Activated CD4-positive, alpha-beta T cell treated with anti-CD3 and anti-CD28 coated beads for 36 hours (primary cell): ENCODE measurements at regions of chr1 and their contacts with region 1.

Region 1: GRCh38 chr1:17045634-17046333 is 8.0 kb downstream of the SDHB start:
- DNase-seq: no peak
- ATAC-seq: no peak
- H3K4me3 Mint-ChIP-seq: no peak overlapping the region
- H3K27ac Mint-ChIP-seq: peak overlapping the region; percentile 42
- H3K4me1 Mint-ChIP-seq: peaks cover 9% of the 10 kb centered on the region
- H3K27me3 Mint-ChIP-seq: no peaks in the 10 kb centered on the region

Region 2: GRCh38 chr1:16913833-16914662 is 131.7 kb before region 1 on chr1:
- CTCF ChIA-PET with region 1: no interaction called
- POLR2A ChIA-PET with region 1: no interaction called
- intact Hi-C with region 1: no loop called
- DNase-seq: peak; percentile 96
- ATAC-seq: peak; percentile 96
- H3K4me3 Mint-ChIP-seq: peak overlapping the region; percentile 89
- H3K27ac Mint-ChIP-seq: peak overlapping the region; percentile 83
- H3K4me1 Mint-ChIP-seq: peaks cover 31% of the 10 kb centered on the region
- H3K27me3 Mint-ChIP-seq: no peaks in the 10 kb centered on the region

Region 3: GRCh38 chr1:16946646-16947045 is 99.1 kb before region 1 on chr1:
- CTCF ChIA-PET with region 1: interaction called, 22 read pairs
- POLR2A ChIA-PET with region 1: interaction called, 3 read pairs
- intact Hi-C with region 1: loop called (anchors 2 kb)
- DNase-seq: no peak
- ATAC-seq: no peak
- H3K4me3 Mint-ChIP-seq: no peak overlapping the region
- H3K27ac Mint-ChIP-seq: no peak overlapping the region
- H3K4me1 Mint-ChIP-seq: no peaks in the 10 kb centered on the region
- H3K27me3 Mint-ChIP-seq: no peaks in the 10 kb centered on the region

Region 4: GRCh38 chr1:17023102-17023501 is 22.7 kb before region 1 on chr1:
- CTCF ChIA-PET with region 1: interaction called, 10 read pairs
- POLR2A ChIA-PET with region 1: no interaction called
- intact Hi-C with region 1: no loop called
- DNase-seq: no peak
- ATAC-seq: no peak
- H3K4me3 Mint-ChIP-seq: no peak overlapping the region
- H3K27ac Mint-ChIP-seq: no peak overlapping the region
- H3K4me1 Mint-ChIP-seq: peaks cover 8% of the 10 kb centered on the region
- H3K27me3 Mint-ChIP-seq: no peaks in the 10 kb centered on the region

Region 5: GRCh38 chr1:17032741-17033140 is 13.0 kb before region 1 on chr1:
- CTCF ChIA-PET with region 1: interaction called, 20 read pairs
- POLR2A ChIA-PET with region 1: interaction called, 3 read pairs
- intact Hi-C with region 1: no loop called
- DNase-seq: no peak
- ATAC-seq: no peak
- H3K4me3 Mint-ChIP-seq: no peak overlapping the region
- H3K27ac Mint-ChIP-seq: no peak overlapping the region
- H3K4me1 Mint-ChIP-seq: no peaks in the 10 kb centered on the region
- H3K27me3 Mint-ChIP-seq: no peaks in the 10 kb centered on the region

Region 6: DNA sequence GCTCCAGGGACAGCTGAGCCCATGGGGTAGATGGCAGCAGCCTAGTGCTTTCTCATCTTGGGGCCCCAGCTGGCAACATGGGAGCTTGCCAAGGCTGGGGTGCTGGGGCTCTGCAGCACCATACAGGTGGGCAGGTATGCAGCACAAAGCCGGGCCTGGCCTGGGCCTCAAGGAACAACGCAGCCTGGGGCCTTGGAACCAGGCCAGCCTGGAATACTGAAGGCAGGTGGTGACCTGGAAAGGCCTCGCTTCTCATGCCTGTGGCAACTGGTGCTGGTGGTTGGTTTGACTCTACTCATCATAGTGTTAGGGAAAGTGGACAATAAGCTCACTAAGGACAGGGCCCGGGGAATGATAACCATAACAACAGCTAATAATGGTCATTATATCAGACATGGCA is 35.1 kb after region 1 on chr1:
- CTCF ChIA-PET with region 1: no interaction called
- POLR2A ChIA-PET with region 1: no interaction called
- intact Hi-C with region 1: no loop called
- DNase-seq: no peak
- ATAC-seq: no peak
- H3K4me3 Mint-ChIP-seq: no peak overlapping the region
- H3K27ac Mint-ChIP-seq: no peak overlapping the region
- H3K4me1 Mint-ChIP-seq: no peaks in the 10 kb centered on the region
- H3K27me3 Mint-ChIP-seq: no peaks in the 10 kb centered on the region

Region 7: GRCh38 chr1:17403104-17403503 is 357.3 kb after region 1 on chr1:
- CTCF ChIA-PET with region 1: no interaction called
- POLR2A ChIA-PET with region 1: no interaction called
- intact Hi-C with region 1: no loop called
- DNase-seq: no peak
- ATAC-seq: no peak
- H3K4me3 Mint-ChIP-seq: no peak overlapping the region
- H3K27ac Mint-ChIP-seq: no peak overlapping the region
- H3K4me1 Mint-ChIP-seq: no peaks in the 10 kb centered on the region
- H3K27me3 Mint-ChIP-seq: no peaks in the 10 kb centered on the region